Posterior vena cava (tissue), 2 donors: ENCODE measurements at regions of chr7 and their contacts with region 1.

Region 1: GRCh38 chr7:52382731-52383130 is 652.7 kb upstream of the POM121L12 start:
- DNase-seq: no peak

Region 2: GRCh38 chr7:50502001-50502684 is 1880.6 kb before region 1 on chr7:
- intact Hi-C with region 1: no loop called
- DNase-seq: peak; percentile 88

Region 3: GRCh38 chr7:52431082-52431815 is 48.5 kb after region 1 on chr7:
- intact Hi-C with region 1: loop called in 1 of 2 experiments (anchors 1 kb)
- DNase-seq: peak; percentile 54